ENCODE measurements at regions of chr3 and their contacts with region 1.

Region 1: DNA sequence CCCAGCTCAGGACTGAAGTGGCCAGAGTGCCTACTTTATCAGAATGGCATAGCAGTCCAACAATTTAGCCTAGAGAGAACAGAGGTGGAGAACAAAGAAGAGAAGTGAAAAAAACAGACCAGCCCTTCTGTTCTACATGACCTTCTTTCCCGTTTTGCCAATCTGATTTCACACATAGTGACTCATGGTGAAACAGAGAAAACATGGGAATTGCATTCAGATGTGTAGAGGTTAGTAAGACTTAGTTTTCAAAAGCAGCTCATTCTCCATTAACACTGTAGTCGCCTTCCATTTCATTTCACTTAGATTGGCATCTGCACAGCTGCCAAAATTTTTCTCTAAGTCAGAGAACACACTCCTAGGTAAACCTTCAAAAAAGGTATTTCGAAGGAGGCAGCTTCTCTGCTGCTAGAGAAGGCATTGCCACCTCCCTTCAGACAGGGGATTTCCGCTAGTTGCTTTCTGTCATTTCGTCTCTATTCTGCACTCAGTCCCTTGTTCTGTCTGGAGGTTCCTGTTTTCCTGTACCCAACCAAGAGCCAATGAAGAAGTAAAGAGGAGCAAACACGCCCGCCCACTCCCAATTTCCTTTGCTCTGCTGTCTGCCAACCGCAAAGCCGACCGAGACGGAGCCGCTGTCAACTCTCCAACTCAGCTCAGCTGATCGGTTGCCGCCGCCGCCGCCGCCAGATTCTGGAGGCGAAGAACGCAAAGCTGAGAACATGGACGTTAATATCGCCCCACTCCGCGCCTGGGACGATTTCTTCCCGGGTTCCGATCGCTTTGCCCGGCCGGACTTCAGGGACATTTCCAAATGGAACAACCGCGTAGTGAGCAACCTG is at the start of gene ARL6IP5:
- DNase-seq: peak; percentile 98
- total RNA-seq, gene ARL6IP5: 167 TPM

Region 2: GRCh38 chr3:69013253-69014021 is 71.1 kb before region 1 on chr3 and contains the start of gene EOGT:
- intact Hi-C with region 1: loop called (anchors 5 kb)
- DNase-seq: peak; percentile 95
- total RNA-seq, gene EOGT: 44.0 TPM

Region 3: GRCh38 chr3:69051756-69052471 is 32.6 kb before region 1 on chr3 and contains the start of gene TMF1:
- intact Hi-C with region 1: loop called (anchors 1 kb)
- DNase-seq: peak; percentile 98
- total RNA-seq, gene TMF1: 22.8 TPM

Region 4: GRCh38 chr3:69116897-69117296 is 32.4 kb after region 1 on chr3:
- intact Hi-C with region 1: loop called (anchors 1 kb)
- DNase-seq: no peak